Heart right ventricle (tissue), 16 donors: ENCODE measurements at regions of chrX and their contacts with region 1.

Region 1: DNA sequence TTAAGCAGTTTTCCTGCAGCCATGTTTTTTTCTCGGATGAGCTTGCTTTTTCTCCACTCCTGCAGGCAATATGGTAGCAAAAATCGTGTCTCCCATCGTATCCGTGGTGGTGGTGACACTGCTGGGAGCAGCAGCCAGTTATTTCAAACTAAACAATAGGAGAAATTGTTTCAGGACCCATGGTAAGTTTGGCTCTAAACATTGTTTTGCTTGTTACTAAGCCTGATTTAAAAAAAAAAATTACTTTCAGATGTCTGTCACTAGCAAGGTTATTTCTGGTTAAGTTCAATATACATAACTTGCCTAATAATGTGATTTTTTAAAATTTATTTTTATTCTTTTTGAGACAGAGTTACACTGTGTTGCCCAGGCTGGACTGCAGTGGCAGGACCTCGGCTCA is 17.5 kb upstream of the GYG2 start:
- DNase-seq: no peak
- ATAC-seq: no peak
- H3K4me3 ChIP-seq: no peak overlapping the region
- H3K27ac ChIP-seq: no peak overlapping the region
- H3K4me1 ChIP-seq: peaks cover 0 to 4% (median 0%) of the 10 kb centered on the region in 9 donors
- H3K27me3 ChIP-seq: peaks cover 0 to 11% (median 0%) of the 10 kb centered on the region in 7 donors
- CTCF ChIP-seq: no peak

Region 2: GRCh38 chrX:2640275-2641150 is 170.8 kb before region 1 on chrX:
- intact Hi-C with region 1: loop called (anchors 2 to 10 kb)
- DNase-seq: no peak
- ATAC-seq: no peak
- H3K4me3 ChIP-seq: no peak overlapping the region
- H3K27ac ChIP-seq: no peak overlapping the region
- H3K4me1 ChIP-seq: no peaks in the 10 kb centered on the region
- H3K27me3 ChIP-seq: no peaks in the 10 kb centered on the region
- CTCF ChIP-seq: no peak

Region 3: GRCh38 chrX:2652106-2652505 is 159.2 kb before region 1 on chrX:
- intact Hi-C with region 1: loop called in 6 of 10 experiments (anchors 5 to 10 kb)
- DNase-seq: no peak
- ATAC-seq: no peak
- H3K4me3 ChIP-seq: no peak overlapping the region
- H3K27ac ChIP-seq: no peak overlapping the region
- H3K4me1 ChIP-seq: peaks cover 0 to 4% (median 0%) of the 10 kb centered on the region in 9 donors
- H3K27me3 ChIP-seq: no peaks in the 10 kb centered on the region
- CTCF ChIP-seq: peak in 2 of 9 donors; percentile 14 to 22